ENCODE measurements at regions of chr11 and their contacts with region 1.

Region 1: DNA sequence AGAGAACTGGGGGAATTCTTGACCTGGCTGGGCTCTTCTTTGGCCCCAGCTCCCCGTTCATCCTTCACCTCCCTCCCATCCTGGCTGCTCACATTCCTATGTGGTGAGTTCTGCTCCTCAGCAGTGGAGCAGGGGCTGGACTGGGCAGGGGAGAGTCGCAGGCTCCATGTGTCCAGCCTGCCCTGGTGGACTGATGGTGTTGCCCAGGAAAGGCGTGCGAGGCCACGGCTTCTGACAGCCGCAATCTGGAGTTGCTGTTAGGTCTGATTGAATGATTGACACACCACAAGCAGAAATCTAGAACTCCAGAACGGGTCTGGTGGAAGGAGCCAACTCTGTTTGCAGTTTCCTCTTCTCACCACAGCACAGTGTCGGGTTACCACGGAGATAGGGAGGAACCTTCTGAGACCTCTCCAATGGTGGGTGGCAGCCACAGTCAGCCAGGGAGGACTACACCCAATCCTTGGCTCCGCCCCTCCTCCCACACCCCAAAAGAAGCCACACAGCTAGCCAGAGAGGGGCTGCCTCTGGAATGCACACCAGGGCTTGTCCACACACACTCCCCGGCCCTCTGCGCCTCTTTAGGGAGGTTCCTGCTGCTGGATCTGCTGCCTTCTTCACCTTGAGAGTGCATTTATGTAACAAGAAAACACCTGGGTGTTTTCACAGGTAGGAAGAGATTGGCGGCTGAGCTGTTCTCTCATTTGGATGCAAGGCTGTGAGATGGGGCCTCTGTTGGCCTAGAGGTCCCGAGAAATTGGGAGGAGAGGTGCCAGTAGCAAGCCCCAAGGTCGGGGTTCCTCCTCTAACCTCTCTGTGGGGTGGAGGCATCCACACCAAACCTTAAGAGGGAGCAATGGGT is 56.4 kb upstream of the CD44 start:
- DNase-seq: peak; percentile 91
- ATAC-seq: peak; percentile 63
- H3K4me3 ChIP-seq: peak overlapping the region in 3 of 5 experiments; percentile 29 to 55 (median 34)
- H3K4me3 Mint-ChIP-seq: peak overlapping the region; percentile 80
- H3K27ac ChIP-seq: peak overlapping the region; percentile 96
- H3K27ac Mint-ChIP-seq: peak overlapping the region; percentile 98
- H3K4me1 ChIP-seq: peaks cover 66 to 71% of the 10 kb centered on the region in 2 donors
- H3K4me1 Mint-ChIP-seq: peaks cover 85% of the 10 kb centered on the region
- H3K27me3 ChIP-seq: no peaks in the 10 kb centered on the region
- H3K27me3 Mint-ChIP-seq: no peaks in the 10 kb centered on the region
- CTCF ChIP-seq: no peak

Region 2: DNA sequence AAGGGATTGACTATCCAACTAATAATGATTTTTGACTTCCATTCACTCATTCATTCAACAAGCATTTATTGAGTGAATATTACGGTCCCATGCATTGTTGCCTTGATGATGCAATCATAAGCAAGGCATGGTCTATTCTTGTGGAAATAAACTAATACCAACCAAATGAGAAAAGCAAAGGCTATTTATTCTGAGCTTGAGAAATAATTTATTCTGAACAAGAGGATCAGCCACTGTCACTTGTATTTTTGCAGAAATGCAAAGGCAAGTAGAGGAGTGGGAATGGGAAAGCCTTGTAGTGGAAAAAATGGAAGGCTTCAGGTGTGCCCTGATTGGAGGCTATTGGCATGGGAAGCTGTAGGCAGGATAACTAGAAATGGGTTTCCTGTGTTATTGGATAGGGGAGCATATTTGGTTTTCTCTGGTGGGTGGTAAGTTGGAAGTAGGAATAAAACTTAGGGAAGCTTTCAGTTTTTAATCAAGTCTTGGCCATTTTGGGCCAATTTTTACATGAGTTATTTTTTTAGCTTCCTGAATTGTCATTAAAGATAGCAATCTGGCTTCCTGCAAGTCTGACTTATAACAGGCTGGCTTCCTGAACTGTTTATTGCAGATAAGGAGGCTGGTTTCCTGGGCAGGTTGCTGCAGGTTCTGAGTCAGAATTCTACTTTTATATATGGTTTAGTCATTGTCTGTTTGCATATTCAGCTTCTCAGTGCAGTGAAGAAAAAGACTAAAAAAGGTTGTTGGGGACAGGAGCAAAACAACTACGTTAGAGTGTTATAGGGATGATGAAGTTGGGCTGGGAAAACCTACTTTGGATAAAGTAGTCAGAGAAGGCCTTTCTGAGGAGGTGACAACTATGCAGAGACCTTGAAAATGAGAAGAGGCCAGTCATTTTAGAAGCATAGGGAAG is 273.1 kb before region 1 on chr11:
- CTCF ChIA-PET with region 1: no interaction called
- POLR2A ChIA-PET with region 1: no interaction called
- intact Hi-C with region 1: no loop called
- DNase-seq: no peak
- ATAC-seq: no peak
- H3K4me3 ChIP-seq: no peak overlapping the region
- H3K4me3 Mint-ChIP-seq: no peak overlapping the region
- H3K27ac ChIP-seq: no peak overlapping the region
- H3K27ac Mint-ChIP-seq: no peak overlapping the region
- H3K4me1 ChIP-seq: no peaks in the 10 kb centered on the region
- H3K4me1 Mint-ChIP-seq: no peaks in the 10 kb centered on the region
- H3K27me3 ChIP-seq: peaks cover 0 to 5% (median 2%) of the 10 kb centered on the region in 4 experiments
- H3K27me3 Mint-ChIP-seq: peaks cover 33% of the 10 kb centered on the region
- CTCF ChIP-seq: no peak

Region 3: GRCh38 chr11:34997952-34998528 is 84.5 kb before region 1 on chr11:
- CTCF ChIA-PET with region 1: interaction called, 9 read pairs
- POLR2A ChIA-PET with region 1: no interaction called
- intact Hi-C with region 1: loop called (anchors 1 kb)
- DNase-seq: peak; percentile 63
- ATAC-seq: peak; percentile 56
- H3K4me3 ChIP-seq: peak overlapping the region in 2 of 5 experiments; percentile 2 to 31
- H3K4me3 Mint-ChIP-seq: peak overlapping the region; percentile 59
- H3K27ac ChIP-seq: peak overlapping the region in 1 of 2 donors; percentile 4
- H3K27ac Mint-ChIP-seq: peak overlapping the region; percentile 71
- H3K4me1 ChIP-seq: peaks cover 11 to 16% of the 10 kb centered on the region in 2 donors
- H3K4me1 Mint-ChIP-seq: peaks cover 27% of the 10 kb centered on the region
- H3K27me3 ChIP-seq: no peaks in the 10 kb centered on the region
- H3K27me3 Mint-ChIP-seq: no peaks in the 10 kb centered on the region
- CTCF ChIP-seq: peak; percentile 93

Region 4: DNA sequence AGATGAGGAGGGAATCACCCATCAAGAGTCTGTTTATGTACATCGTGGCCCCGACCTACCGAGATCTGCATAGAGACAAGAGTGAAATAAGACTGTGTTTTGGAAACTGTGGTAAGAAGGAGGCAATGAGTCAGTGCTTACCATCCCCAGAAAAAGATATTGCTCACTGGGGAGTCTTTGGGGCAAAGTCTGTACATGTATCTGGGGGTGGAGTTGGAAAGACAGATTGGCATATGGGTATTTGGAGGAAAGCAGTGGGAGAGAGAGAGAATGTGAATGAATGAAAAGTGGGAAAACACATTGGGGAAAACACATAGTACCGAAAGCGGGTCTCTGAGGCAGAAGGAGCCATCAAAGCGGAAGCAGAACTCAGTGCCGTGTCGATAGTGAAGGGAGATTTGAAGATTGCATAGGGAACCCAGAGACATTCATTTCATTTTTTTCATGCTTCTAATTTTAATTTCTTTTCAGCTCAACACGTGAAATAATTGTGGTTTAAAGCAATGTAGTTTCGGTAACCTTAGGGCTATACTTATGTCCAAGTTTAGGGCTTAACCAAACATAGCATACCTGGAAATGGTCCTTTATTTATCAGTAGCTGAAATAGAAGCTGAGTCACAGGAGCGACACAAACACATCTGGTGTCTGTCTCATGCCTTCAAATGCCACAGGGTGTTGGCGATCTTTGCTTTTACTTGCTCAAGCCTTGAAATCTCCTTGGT is 42.2 kb before region 1 on chr11:
- CTCF ChIA-PET with region 1: interaction called, 3 read pairs
- POLR2A ChIA-PET with region 1: interaction called, 12 read pairs
- intact Hi-C with region 1: loop called (anchors 1 kb)
- DNase-seq: peak; percentile 72
- ATAC-seq: peak; percentile 68
- H3K4me3 ChIP-seq: peak overlapping the region in 3 of 5 experiments; percentile 25 to 44 (median 40)
- H3K4me3 Mint-ChIP-seq: peak overlapping the region; percentile 86
- H3K27ac ChIP-seq: peak overlapping the region; percentile 41 to 66
- H3K27ac Mint-ChIP-seq: peak overlapping the region; percentile 94
- H3K4me1 ChIP-seq: peaks cover 34 to 39% of the 10 kb centered on the region in 2 donors
- H3K4me1 Mint-ChIP-seq: peaks cover 48% of the 10 kb centered on the region
- H3K27me3 ChIP-seq: no peaks in the 10 kb centered on the region
- H3K27me3 Mint-ChIP-seq: no peaks in the 10 kb centered on the region
- CTCF ChIP-seq: no peak

Region 5: DNA sequence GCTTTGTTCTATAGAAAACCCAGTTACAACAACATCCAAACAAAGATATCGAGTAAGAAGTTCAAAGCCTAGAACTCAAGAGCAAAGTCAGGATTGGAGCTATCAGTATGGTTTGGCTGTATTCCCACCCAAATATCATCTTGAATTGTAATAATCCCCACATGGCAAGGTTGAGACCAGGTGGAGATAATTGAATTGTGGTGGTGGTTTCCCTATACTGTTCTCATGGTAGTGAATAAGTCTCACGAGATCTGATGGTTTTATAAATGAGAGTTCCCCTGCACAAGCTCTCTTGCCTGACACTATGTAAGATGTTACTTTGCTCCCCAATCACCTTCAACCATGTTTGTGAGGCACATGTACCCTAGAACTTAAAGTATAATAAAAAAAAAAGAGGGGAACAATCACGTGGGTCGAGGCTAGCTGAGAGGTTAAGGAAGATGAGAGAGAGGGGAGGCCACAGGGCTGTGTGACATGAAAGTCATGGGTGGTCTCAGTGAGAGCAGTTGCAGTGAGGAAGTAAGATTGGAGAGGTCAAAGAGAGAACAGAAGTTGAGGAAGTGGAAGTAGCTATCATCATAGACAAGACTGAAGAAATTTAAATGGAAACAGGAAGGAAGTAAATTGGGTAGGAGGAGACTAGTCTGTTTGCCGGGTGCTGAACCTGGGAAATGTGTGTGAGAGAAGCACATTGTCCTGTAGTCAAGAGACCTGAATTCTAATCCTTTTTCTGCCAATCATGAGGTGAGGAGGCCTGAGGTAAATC is 23.7 kb before region 1 on chr11:
- CTCF ChIA-PET with region 1: interaction called, 5 read pairs
- POLR2A ChIA-PET with region 1: interaction called, 4 read pairs
- intact Hi-C with region 1: loop called (anchors 2 kb)
- DNase-seq: peak; percentile 73
- ATAC-seq: peak; percentile 85
- H3K4me3 ChIP-seq: no peak overlapping the region
- H3K4me3 Mint-ChIP-seq: peak overlapping the region; percentile 2
- H3K27ac ChIP-seq: peak overlapping the region; percentile 69 to 77
- H3K27ac Mint-ChIP-seq: peak overlapping the region; percentile 63
- H3K4me1 ChIP-seq: peaks cover 29% of the 10 kb centered on the region in 2 donors
- H3K4me1 Mint-ChIP-seq: peaks cover 32% of the 10 kb centered on the region
- H3K27me3 ChIP-seq: no peaks in the 10 kb centered on the region
- H3K27me3 Mint-ChIP-seq: no peaks in the 10 kb centered on the region
- CTCF ChIP-seq: no peak

Region 6: DNA sequence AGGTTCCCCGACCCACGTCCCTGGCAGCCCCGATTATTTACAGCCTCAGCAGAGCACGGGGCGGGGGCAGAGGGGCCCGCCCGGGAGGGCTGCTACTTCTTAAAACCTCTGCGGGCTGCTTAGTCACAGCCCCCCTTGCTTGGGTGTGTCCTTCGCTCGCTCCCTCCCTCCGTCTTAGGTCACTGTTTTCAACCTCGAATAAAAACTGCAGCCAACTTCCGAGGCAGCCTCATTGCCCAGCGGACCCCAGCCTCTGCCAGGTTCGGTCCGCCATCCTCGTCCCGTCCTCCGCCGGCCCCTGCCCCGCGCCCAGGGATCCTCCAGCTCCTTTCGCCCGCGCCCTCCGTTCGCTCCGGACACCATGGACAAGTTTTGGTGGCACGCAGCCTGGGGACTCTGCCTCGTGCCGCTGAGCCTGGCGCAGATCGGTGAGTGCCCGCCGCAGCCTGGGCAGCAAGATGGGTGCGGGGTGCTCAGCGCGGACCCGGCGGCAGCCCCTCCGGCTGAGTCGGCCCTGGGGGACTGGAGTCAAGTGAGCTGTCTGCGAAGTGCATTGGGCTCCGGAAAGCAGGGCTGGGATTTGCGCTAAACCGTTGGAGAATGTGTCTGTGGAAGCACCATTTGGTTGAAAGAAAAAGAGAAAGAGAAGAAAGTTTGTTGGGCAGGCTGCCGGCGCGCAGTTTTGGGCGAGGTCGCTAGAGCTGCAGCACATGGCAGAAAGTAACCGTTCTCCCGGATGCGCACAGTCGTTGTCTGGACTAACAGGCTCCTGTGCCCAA is 56.6 kb after region 1 on chr11 and contains the start of gene CD44:
- CTCF ChIA-PET with region 1: interaction called, 13 read pairs
- POLR2A ChIA-PET with region 1: interaction called, 7 read pairs
- intact Hi-C with region 1: loop called (anchors 1 kb)
- DNase-seq: peak; percentile 90
- ATAC-seq: peak; percentile 78
- H3K4me3 ChIP-seq: peak within 1 kb of the TSS; percentile 80 to 90 (median 89)
- H3K4me3 Mint-ChIP-seq: peak within 1 kb of the TSS; percentile 96
- H3K27ac ChIP-seq: peak within 1 kb of the TSS; percentile 88 to 94
- H3K27ac Mint-ChIP-seq: peak within 1 kb of the TSS; percentile 99
- H3K4me1 ChIP-seq: peaks cover 44 to 55% of the 10 kb centered on the region in 2 donors
- H3K4me1 Mint-ChIP-seq: peaks cover 48% of the 10 kb centered on the region
- H3K27me3 ChIP-seq: no peaks in the 10 kb centered on the region
- H3K27me3 Mint-ChIP-seq: no peaks in the 10 kb centered on the region
- CTCF ChIP-seq: no peak
- total RNA-seq, gene CD44: 895 and 896 TPM in 2 replicates

Region 7: DNA sequence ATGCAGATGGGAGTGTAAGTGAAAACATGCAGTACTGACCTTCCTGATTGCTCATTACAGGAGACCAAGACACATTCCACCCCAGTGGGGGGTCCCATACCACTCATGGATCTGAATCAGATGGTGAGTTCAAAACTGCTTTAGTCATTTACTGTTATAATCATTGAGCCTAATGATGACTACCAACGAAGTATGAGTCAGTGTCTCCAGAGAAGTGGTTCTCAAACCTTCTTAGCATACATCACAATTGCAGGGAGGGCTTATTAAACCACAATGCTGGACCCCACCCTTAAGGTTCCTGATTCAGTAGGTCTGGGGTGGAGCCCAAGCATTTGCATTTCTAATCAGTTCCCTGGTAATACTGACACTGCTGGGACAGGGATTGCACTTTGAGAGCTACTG is 132.2 kb after region 1 on chr11:
- CTCF ChIA-PET with region 1: interaction called, 3 read pairs
- POLR2A ChIA-PET with region 1: no interaction called
- intact Hi-C with region 1: loop called (anchors 5 kb)
- DNase-seq: no peak
- ATAC-seq: peak; percentile 46
- H3K4me3 ChIP-seq: no peak overlapping the region
- H3K4me3 Mint-ChIP-seq: peak overlapping the region; percentile 40
- H3K27ac ChIP-seq: peak overlapping the region in 1 of 2 donors; percentile 3
- H3K27ac Mint-ChIP-seq: peak overlapping the region; percentile 52
- H3K4me1 ChIP-seq: peaks cover 49 to 59% of the 10 kb centered on the region in 2 donors
- H3K4me1 Mint-ChIP-seq: peaks cover 70% of the 10 kb centered on the region
- H3K27me3 ChIP-seq: no peaks in the 10 kb centered on the region
- H3K27me3 Mint-ChIP-seq: no peaks in the 10 kb centered on the region
- CTCF ChIP-seq: no peak

Measured in B cell (primary cell).